ENCODE measurements at regions of chr11 and their contacts with region 1.

Region 1: GRCh38 chr11:32050264-32050663 is 40.6 kb upstream of the RCN1 start:
- DNase-seq: no peak
- H3K4me3 ChIP-seq: no peak overlapping the region
- H3K27ac ChIP-seq: no peak overlapping the region
- H3K4me1 ChIP-seq: no peaks in the 10 kb centered on the region
- H3K27me3 ChIP-seq: peaks cover 0 to 23% of the 10 kb centered on the region in 2 donors
- CTCF ChIP-seq: no peak

Region 2: DNA sequence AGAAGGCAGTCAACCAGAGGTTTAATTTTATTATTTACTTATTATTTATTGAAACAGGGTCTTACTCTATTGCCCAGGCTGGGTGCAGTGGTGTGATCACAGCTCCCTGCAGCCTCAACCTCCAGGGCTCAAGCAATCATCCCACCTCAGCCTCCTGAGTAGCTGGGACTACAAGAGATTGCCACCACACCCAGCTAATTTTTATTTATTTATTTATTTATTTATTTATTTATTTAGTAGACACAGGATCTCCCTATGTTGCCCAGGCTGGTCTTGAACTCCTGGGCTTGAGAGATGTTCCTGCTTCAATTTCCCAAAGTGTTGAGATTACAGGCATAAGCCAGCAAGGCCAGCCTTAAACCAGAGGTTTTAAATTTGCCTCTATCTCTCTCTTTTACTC is 123.7 kb after region 1 on chr11:
- intact Hi-C with region 1: loop called (anchors 2 kb)
- DNase-seq: no peak
- H3K4me3 ChIP-seq: no peak overlapping the region
- H3K27ac ChIP-seq: no peak overlapping the region
- H3K4me1 ChIP-seq: peaks cover 0 to 10% (median 4%) of the 10 kb centered on the region in 4 donors
- H3K27me3 ChIP-seq: no peaks in the 10 kb centered on the region
- CTCF ChIP-seq: no peak

Measured in tibial artery (tissue), 4 donors.